HEK293T (cell line): ENCODE measurements at regions of chr1 and their contacts with region 1.

Region 1: DNA sequence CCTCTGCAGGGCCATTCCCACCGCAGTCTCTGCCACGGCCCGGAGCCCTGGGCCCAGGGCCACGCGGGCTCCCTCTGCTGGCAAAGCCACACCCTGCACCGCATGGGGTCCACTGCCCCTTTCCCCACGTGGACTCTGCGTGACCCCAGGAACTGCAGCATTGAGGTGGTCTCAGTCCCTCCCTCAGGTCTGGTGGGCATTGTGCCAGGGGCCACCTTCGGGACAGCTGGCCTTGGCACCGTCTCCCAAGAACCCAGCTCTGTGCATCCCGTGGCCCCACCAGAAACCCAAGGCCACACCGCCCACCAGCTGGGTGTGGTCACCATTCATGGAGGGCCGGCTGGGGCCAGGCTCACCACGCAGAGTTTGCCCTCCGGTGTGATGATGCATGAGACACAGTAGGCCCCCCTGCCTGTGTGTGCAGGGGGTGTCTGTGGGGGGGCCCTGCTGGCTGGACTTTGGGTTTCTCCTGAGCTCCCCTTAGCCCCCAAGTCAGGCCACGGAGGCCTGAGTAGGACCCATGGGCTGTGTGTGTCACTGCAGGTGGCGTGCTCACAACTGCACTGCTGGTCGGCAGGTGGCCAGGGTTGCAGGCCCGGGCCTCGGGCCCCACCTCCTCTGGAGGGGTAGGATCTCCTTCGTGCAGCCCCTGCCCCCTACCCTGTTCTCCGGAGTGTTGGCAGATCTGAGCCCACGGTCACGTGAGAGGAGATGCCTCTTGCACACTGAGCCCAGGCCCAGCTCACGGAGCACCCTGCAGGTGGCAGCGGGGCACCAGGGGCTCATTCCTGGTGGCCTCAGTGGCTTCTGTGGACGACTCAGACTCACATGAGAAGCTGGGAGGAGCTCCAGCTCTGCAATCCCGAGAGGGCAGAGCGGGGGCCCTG is 5.8 kb downstream of the VWA1 start:
- DNase-seq: peak; percentile 83

Region 2: GRCh38 chr1:1291548-1292441 is 149.4 kb before region 1 on chr1:
- CTCF ChIA-PET with region 1: no interaction called
- POLR2A ChIA-PET with region 1: no interaction called
- DNase-seq: peak; percentile 75

Region 3: DNA sequence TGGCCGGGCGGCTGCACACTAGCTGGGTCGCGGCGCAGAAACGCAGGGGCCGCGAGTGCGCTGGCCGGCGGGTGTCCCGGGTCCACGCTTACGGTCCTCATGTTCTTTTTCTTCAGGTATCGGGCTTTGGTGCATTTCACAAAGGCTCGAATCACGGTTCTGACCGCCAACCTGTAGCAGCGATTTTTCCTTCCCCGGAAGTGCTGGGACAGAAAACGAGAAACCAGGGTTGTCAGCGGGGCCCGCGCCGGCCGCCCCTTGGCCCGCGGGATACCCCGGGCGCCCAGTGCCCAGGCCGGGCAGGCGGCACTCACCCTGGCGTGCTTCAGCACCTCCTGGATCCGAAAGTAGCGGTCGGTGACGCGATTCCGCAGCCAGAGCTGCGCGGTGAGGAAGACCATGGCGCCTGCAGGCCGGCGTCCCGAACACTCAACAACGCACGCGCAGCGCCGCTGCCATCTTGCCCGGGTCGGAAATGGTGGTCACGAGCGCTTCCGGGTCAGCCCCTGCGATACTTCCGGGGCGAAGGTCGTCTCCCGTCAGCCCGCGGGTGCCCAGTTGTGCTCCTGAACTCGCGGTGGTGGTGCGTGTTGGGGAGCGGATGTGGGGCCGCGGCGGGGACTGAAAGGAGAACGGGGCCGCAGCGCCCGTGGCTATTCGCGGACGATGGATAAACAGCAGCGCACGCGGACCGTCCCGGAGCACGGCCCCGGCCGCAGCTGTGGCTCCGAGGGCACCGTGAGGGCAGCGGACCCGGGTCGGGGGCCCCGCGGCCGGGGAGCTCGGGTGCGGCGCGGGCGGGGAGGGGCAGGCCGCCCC is 34.2 kb before region 1 on chr1 and contains the start of gene MRPL20:
- CTCF ChIA-PET with region 1: interaction called, 5 read pairs
- POLR2A ChIA-PET with region 1: interaction called, 15 read pairs
- DNase-seq: peak; percentile 93

Region 4: DNA sequence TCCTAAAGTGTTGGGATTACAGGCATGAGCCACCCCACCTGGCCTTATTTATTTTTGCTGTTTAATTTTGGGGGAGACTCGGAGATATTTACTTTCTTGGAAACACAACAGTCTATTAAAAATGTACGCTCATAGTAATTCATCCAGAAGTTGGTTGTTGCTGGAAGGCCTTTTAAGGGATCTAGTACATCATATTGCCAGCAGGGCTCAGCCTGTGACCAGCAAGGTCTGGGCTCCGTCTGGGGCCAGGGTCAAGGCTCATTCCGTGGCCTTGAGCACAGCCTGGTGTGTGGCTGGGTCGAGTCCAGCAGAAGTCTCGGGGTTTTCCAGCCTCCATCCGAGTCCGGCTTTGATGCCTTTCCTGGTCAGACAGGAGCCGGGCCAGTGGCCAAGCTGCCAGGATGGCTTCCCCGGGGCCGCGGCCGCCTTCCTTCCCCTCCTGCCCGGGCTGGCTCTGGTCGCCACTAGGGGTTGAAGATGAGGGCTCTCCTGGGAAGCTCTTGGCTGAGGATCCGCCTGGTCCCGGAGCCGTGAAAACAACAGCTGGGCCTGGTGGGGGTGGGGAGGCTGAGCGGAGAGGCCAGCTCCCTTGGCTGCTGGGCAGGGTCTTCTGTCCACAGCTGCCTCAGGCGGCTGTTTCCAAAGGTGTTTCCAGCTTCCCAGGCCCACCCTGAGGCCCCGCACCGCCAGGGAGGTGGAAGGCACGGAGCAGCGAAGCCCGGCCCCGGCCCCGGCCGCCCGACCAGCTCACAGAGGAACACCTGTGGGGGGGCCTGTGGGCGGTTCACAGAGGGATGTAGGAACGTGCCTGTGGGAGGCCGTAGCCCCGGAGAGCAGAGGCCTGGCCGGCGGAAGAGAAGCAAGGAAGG is 10.9 kb before region 1 on chr1:
- CTCF ChIA-PET with region 1: interaction called, 13 read pairs
- POLR2A ChIA-PET with region 1: no interaction called
- DNase-seq: peak; percentile 32